Activated CD4-positive, alpha-beta memory T cell treated with anti-CD3 and anti-CD28 coated beads, Interleukin-2, amount 10 ng/mL, durations not matched to agents 7 days and 5 days (primary cell): ENCODE measurements at regions of chr7 and their contacts with region 1.

Region 1: GRCh38 chr7:141654551-141654950 is 47.4 kb downstream of the DENND11 start:
- DNase-seq: peak; percentile 70
- H3K4me3 Mint-ChIP-seq: no peak overlapping the region
- H3K27ac Mint-ChIP-seq: peak overlapping the region; percentile 41
- H3K4me1 Mint-ChIP-seq: peaks cover 7% of the 10 kb centered on the region
- H3K27me3 Mint-ChIP-seq: no peaks in the 10 kb centered on the region

Region 2: DNA sequence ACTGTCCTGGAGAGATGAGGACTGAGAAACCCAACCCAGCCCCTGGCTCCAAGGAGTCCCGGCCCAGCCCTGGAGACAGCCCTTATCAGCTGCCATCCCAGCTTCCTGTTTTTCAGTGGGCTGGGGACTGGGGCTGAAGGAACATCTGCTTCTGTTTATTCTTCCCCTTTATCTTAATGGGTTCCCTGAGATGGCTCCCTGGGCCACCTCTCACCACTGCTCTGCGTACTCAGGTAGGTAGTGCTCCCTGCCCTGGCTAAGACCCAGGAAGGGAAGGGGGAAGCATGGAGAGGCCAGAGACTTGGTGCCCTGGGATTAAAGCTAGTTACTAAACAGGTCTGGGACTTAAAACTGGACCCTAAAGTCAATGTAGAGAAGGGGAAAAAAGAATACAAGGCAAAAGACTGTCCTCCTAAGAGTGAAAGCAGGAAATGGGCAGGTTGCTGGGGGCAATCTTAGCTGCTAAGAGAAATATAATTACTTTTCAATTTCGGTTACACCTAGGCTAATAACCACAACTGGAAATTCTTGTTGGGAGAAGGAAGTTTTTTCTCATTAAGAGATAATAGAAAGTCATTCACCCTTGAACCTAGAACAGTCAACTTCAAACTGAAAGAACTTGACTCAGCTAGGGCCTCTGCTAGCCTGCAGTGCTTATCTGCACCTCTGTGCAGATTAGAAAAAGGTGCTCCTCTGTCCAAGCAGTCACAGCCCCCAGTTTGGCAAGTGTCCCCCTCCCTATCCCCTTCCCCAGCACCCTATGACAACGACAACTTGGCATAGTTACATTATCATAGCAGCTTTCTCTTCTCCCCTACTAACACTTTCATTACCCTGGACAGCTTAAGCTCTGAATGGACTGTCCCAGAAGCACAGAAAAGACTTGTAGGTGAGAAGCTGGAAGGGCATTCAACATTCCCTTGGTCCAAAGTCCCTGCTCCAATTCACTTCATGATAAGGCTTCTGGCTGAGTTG is 1412.2 kb before region 1 on chr7:
- CTCF ChIA-PET with region 1: no interaction called
- POLR2A ChIA-PET with region 1: no interaction called
- DNase-seq: no peak
- H3K4me3 Mint-ChIP-seq: no peak overlapping the region
- H3K27ac Mint-ChIP-seq: peak overlapping the region; percentile 8
- H3K4me1 Mint-ChIP-seq: peaks cover 20% of the 10 kb centered on the region
- H3K27me3 Mint-ChIP-seq: no peaks in the 10 kb centered on the region

Region 3: GRCh38 chr7:141593134-141593533 is 61.4 kb before region 1 on chr7:
- CTCF ChIA-PET with region 1: no interaction called
- POLR2A ChIA-PET with region 1: no interaction called
- DNase-seq: no peak
- H3K4me3 Mint-ChIP-seq: no peak overlapping the region
- H3K27ac Mint-ChIP-seq: no peak overlapping the region
- H3K4me1 Mint-ChIP-seq: peaks cover 13% of the 10 kb centered on the region
- H3K27me3 Mint-ChIP-seq: no peaks in the 10 kb centered on the region

Region 4: DNA sequence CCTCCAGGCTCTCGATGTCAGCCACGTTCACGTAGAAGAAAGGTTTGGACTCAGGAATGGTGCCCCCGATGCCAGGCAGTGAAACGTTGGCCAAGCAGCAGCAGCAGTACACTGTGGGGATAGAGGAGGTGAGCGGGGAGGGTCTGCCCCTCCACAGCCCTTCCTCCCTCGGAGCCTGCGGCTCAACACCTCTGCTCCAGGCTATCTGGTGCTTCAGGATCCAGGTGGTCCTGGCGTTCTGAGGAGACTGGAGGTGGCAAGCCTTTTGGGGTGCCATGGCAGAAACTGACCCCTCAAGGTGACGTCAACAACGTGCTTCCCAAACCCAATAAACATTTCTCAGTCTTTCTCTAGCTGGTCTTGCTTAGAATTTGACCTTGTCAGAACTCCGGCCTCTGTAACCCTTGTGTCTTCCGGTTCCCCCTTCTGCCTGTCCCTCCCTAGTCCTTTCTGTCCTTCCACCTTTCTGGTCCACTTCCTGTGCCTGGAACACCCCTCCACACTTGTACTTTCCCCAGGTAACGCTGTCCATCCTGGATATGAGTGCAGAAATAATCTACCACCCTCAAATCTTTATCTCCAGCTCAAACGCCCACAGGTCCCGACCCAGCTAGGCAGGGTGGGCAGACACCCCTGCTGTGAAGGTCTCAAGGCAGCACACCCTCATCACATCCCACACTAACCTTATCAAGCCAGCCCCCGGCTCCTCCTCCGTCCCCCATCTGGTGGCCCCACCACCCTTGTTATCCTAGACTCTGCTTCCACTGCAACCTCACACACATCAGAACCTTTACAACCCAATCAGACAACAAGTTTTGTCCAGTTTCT is 10.9 kb after region 1 on chr7:
- CTCF ChIA-PET with region 1: interaction called, 10 read pairs
- POLR2A ChIA-PET with region 1: no interaction called
- DNase-seq: no peak
- H3K4me3 Mint-ChIP-seq: no peak overlapping the region
- H3K27ac Mint-ChIP-seq: no peak overlapping the region
- H3K4me1 Mint-ChIP-seq: peaks cover 33% of the 10 kb centered on the region
- H3K27me3 Mint-ChIP-seq: no peaks in the 10 kb centered on the region

Region 5: GRCh38 chr7:141674702-141675101 is 20.2 kb after region 1 on chr7:
- CTCF ChIA-PET with region 1: interaction called, 14 read pairs
- POLR2A ChIA-PET with region 1: interaction called, 4 read pairs
- DNase-seq: no peak
- H3K4me3 Mint-ChIP-seq: no peak overlapping the region
- H3K27ac Mint-ChIP-seq: peak overlapping the region; percentile 70
- H3K4me1 Mint-ChIP-seq: peaks cover 37% of the 10 kb centered on the region
- H3K27me3 Mint-ChIP-seq: no peaks in the 10 kb centered on the region

Region 6: DNA sequence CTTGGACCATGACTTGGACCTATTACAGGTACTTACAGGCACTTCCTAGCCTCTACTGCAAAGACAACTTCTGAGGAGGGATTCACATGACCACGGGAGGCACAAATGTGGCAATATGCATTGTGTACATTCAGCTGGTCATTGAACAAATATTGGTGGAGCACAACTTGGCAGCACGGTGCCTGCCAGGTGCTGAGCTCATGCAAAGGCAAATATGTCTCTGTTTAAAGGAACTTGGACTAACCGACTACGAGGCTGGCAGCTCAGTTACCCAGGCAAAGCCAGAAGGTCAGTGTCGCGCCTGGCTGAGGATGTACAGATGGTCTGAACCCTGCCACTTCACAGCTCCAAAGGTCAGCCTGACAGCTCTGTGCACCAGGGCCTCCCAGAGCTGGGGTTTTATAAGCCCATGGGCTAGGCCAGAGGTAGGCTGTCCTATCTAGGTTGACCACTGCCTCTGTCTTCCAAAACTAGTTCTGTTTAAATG is 41.3 kb after region 1 on chr7:
- CTCF ChIA-PET with region 1: interaction called, 13 read pairs
- POLR2A ChIA-PET with region 1: interaction called, 3 read pairs
- DNase-seq: no peak
- H3K4me3 Mint-ChIP-seq: no peak overlapping the region
- H3K27ac Mint-ChIP-seq: no peak overlapping the region
- H3K4me1 Mint-ChIP-seq: peaks cover 22% of the 10 kb centered on the region
- H3K27me3 Mint-ChIP-seq: peaks cover 9% of the 10 kb centered on the region

Region 7: DNA sequence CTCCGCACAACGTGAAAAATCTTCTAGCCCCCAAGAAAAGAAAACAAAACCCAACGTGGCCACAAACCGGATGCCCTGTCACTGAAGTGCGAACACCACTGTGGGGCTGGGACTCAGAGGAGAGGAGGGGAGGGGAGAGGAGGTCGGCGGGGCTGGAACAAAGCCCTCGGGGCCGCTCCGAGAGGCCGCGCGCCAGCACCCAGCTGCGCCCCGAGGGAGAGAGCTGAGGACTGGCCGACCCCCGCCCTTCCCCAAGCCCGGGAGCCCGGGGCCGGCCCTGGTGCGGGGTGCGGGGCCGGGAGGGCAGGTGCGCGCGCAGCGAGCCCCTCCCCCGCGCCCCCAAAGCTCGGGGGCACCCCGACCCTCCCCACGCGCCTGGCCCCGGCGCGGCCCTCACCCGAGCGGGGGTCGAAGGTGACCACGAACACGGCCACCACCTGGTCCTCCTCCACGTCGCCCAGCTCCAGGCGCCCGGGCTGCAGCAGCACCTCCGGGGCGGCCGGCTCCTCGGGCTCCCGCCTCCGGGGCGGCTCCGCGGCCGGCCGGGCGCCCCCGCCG is 47.0 kb after region 1 on chr7:
- CTCF ChIA-PET with region 1: interaction called, 13 read pairs
- POLR2A ChIA-PET with region 1: interaction called, 3 read pairs
- DNase-seq: peak; percentile 78
- H3K4me3 Mint-ChIP-seq: peak overlapping the region; percentile 79
- H3K27ac Mint-ChIP-seq: peak overlapping the region; percentile 54
- H3K4me1 Mint-ChIP-seq: peaks cover 30% of the 10 kb centered on the region
- H3K27me3 Mint-ChIP-seq: peaks cover 29% of the 10 kb centered on the region

Region 8: DNA sequence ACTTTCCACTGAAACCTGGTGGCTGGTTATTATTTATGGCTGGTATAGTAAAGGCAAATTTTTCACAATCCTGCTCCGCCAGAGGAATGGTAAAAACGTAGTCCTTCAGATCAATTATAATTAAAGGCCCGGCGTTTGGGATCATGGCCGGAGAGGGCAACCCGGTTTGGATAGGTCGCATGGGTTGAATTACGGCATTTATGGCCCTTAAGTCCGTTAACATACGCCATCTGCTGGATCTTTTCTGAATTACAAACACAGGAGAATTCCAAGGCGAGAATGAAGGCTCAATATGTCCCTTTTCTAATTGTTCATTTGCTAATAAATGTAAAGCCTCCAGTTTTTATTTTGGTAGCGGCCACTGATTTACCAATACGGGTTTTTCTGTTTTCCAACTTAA is 98.1 kb after region 1 on chr7:
- CTCF ChIA-PET with region 1: no interaction called
- POLR2A ChIA-PET with region 1: no interaction called
- DNase-seq: no peak
- H3K4me3 Mint-ChIP-seq: no peak overlapping the region
- H3K27ac Mint-ChIP-seq: no peak overlapping the region
- H3K4me1 Mint-ChIP-seq: no peaks in the 10 kb centered on the region
- H3K27me3 Mint-ChIP-seq: no peaks in the 10 kb centered on the region

Region 9: DNA sequence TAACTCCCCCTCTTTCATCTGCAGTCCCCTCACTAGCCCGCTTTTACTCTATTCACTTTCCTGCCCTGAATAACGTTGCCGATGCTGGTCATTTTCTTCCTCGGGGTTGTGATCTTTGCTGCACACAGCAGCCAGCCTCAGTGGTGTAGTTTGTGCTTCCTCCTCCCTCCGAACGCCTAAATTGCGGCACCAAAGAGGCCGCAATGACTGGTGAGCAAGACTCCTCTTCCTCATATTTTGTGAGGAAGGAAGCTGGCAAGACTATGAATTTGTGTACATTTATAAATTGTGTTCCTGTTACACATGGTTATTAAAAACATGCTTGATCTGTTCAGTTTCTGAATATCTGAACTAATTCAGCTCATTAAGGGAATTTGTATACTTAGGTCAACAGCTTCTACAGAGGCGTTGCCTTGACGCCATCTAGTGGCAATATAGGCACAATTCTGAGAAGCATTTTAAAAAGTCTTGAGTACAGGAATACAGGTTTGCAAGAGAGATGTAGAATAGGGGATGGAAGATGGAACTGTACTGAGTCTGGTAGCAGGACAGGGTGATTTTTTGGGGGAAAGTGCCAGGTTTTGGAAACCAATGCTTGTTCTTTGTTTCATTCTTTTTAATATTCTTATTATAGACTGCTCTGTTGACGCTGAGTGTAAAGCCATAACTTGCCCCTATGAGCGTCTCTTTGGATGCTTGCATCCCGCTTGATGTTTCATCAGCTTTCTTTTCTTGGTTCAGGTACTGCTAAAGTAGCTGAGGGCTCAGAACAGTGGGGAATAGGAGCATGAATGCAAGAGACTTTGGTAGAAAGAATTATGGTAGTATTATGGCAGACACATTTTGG is 131.4 kb after region 1 on chr7:
- CTCF ChIA-PET with region 1: interaction called, 40 read pairs
- POLR2A ChIA-PET with region 1: no interaction called
- DNase-seq: peak; percentile 31
- H3K4me3 Mint-ChIP-seq: no peak overlapping the region
- H3K27ac Mint-ChIP-seq: no peak overlapping the region
- H3K4me1 Mint-ChIP-seq: no peaks in the 10 kb centered on the region
- H3K27me3 Mint-ChIP-seq: no peaks in the 10 kb centered on the region

Region 10: DNA sequence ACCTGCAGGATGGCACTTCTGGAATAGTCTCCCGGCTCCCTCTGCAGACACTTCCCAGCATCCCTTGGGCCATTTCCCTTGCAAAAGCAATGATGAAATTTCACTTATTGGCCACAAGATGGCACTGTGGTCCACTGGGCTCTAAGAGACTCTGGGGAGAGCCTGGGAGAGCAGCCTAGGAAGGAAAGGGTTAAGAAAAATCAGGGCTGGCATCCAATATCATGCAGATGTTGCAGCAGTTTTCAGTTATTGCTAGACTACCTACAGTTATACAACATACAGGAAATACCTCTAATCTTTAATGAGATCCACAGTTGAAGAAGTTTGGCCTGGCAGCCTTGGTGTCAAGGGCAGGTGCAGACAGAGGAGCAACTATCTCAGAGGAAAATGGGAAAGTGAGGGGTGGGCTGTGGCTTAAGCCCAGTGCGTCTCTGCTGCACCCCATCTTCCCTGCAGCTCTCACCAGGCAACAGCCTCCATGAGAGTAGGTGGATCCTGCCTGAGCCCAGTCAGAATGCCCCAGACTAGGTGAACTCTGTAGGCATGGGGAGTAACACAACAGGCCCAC is 703.5 kb after region 1 on chr7:
- CTCF ChIA-PET with region 1: no interaction called
- POLR2A ChIA-PET with region 1: no interaction called
- DNase-seq: peak; percentile 31
- H3K4me3 Mint-ChIP-seq: no peak overlapping the region
- H3K27ac Mint-ChIP-seq: no peak overlapping the region
- H3K4me1 Mint-ChIP-seq: peaks cover 21% of the 10 kb centered on the region
- H3K27me3 Mint-ChIP-seq: peaks cover 13% of the 10 kb centered on the region